Activated CD8-positive, alpha-beta T cell treated with anti-CD3 and anti-CD28 coated beads, Interleukin-2, amount 10 ng/mL, durations not matched to agents 7 days and 5 days (primary cell): ENCODE measurements at regions of chr9 and their contacts with region 1.

Region 1: GRCh38 chr9:77977210-77977611 is 54.4 kb downstream of the GNAQ start:
- DNase-seq: peak; percentile 69
- ATAC-seq: peak; percentile 48
- H3K4me3 Mint-ChIP-seq: peak overlapping the region; percentile 9
- H3K27ac Mint-ChIP-seq: peak overlapping the region; percentile 67
- H3K4me1 Mint-ChIP-seq: peaks cover 56% of the 10 kb centered on the region
- H3K27me3 Mint-ChIP-seq: no peaks in the 10 kb centered on the region

Region 2: GRCh38 chr9:77841739-77842386 is 135.3 kb before region 1 on chr9:
- CTCF ChIA-PET with region 1: interaction called, 12 read pairs
- POLR2A ChIA-PET with region 1: no interaction called
- DNase-seq: no peak
- ATAC-seq: no peak
- H3K4me3 Mint-ChIP-seq: no peak overlapping the region
- H3K27ac Mint-ChIP-seq: no peak overlapping the region
- H3K4me1 Mint-ChIP-seq: peaks cover 19% of the 10 kb centered on the region
- H3K27me3 Mint-ChIP-seq: no peaks in the 10 kb centered on the region

Region 3: DNA sequence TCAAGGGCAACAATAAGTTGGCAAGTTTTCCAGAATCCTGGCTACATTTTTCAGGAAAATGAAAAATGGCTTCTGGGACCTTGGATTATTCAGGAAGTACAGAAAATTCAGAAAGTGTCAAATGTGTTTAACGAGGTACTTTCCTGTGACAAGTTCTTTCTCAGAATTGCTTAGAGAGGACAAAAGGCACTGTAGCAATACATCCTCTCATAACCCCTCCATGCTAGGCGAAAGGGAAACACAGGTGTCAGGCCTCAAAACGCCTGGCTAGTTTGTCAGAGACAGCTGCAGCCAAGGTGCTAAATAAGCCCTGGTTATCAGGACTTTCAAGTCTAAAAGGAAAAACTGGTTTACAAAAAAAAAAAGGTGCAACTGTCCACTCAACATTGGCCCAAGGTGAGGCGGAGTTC is 60.8 kb before region 1 on chr9:
- CTCF ChIA-PET with region 1: no interaction called
- POLR2A ChIA-PET with region 1: no interaction called
- DNase-seq: no peak
- ATAC-seq: peak; percentile 47
- H3K4me3 Mint-ChIP-seq: no peak overlapping the region
- H3K27ac Mint-ChIP-seq: peak overlapping the region; percentile 4
- H3K4me1 Mint-ChIP-seq: peaks cover 19% of the 10 kb centered on the region
- H3K27me3 Mint-ChIP-seq: no peaks in the 10 kb centered on the region

Region 4: DNA sequence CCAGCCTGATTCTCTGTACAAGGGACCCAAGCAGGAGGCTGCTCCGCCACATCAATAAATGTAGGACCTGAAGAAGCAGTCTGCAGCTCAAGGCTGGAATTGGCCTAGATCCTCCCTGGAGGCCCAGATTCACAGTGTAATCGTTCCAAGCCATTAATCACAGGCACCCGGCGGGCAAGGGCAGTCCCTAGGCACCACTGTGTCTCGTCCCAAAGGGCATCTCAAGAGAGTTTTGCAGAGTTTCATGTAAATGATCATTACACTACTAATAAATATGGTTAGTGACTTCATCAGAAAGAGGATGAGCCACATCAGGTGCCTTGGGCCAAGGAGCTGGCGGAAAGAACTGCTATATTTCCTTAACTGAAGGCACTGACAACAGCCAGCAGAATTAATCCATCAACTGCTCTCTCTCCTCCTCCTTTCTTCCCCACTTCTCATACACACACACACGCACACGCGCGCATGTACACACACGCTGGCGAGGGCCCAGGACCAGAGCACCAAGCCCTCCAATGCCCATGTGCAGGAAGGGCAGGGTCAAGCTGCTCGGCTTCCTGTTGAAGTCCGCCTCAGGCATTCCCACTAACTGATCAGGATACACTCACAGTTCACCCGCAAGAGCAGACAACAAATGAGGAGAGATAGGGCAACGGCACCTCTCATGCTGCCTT is 20.5 kb after region 1 on chr9:
- CTCF ChIA-PET with region 1: interaction called, 16 read pairs
- POLR2A ChIA-PET with region 1: interaction called, 3 read pairs
- DNase-seq: no peak
- ATAC-seq: no peak
- H3K4me3 Mint-ChIP-seq: no peak overlapping the region
- H3K27ac Mint-ChIP-seq: no peak overlapping the region
- H3K4me1 Mint-ChIP-seq: peaks cover 20% of the 10 kb centered on the region
- H3K27me3 Mint-ChIP-seq: no peaks in the 10 kb centered on the region

Region 5: GRCh38 chr9:78023003-78023741 is 46.0 kb after region 1 on chr9:
- CTCF ChIA-PET with region 1: interaction called, 11 read pairs
- POLR2A ChIA-PET with region 1: no interaction called
- DNase-seq: no peak
- ATAC-seq: no peak
- H3K4me3 Mint-ChIP-seq: no peak overlapping the region
- H3K27ac Mint-ChIP-seq: no peak overlapping the region
- H3K4me1 Mint-ChIP-seq: peaks cover 29% of the 10 kb centered on the region
- H3K27me3 Mint-ChIP-seq: no peaks in the 10 kb centered on the region

Region 6: GRCh38 chr9:78121488-78121887 is 144.3 kb after region 1 on chr9:
- CTCF ChIA-PET with region 1: interaction called, 38 read pairs
- POLR2A ChIA-PET with region 1: no interaction called
- DNase-seq: peak; percentile 68
- ATAC-seq: no peak
- H3K4me3 Mint-ChIP-seq: no peak overlapping the region
- H3K27ac Mint-ChIP-seq: no peak overlapping the region
- H3K4me1 Mint-ChIP-seq: peaks cover 23% of the 10 kb centered on the region
- H3K27me3 Mint-ChIP-seq: peaks cover 8% of the 10 kb centered on the region